CD4-positive, alpha-beta memory T cell (primary cell): ENCODE measurements at regions of chr2 and their contacts with region 1.

Region 1: GRCh38 chr2:42095923-42096408 is 48.1 kb downstream of the PKDCC start:
- DNase-seq: peak; percentile 68 to 76 (median 74)
- H3K4me3 ChIP-seq: no peak overlapping the region
- H3K4me3 Mint-ChIP-seq: no peak overlapping the region
- H3K27ac ChIP-seq: no peak overlapping the region
- H3K27ac Mint-ChIP-seq: peak overlapping the region; percentile 22 to 97 (median 80)
- H3K4me1 ChIP-seq: peaks cover 54% of the 10 kb centered on the region
- H3K4me1 Mint-ChIP-seq: peaks cover 37 to 59% (median 46%) of the 10 kb centered on the region in 4 donors
- H3K27me3 ChIP-seq: no peaks in the 10 kb centered on the region
- H3K27me3 Mint-ChIP-seq: no peaks in the 10 kb centered on the region

Region 2: DNA sequence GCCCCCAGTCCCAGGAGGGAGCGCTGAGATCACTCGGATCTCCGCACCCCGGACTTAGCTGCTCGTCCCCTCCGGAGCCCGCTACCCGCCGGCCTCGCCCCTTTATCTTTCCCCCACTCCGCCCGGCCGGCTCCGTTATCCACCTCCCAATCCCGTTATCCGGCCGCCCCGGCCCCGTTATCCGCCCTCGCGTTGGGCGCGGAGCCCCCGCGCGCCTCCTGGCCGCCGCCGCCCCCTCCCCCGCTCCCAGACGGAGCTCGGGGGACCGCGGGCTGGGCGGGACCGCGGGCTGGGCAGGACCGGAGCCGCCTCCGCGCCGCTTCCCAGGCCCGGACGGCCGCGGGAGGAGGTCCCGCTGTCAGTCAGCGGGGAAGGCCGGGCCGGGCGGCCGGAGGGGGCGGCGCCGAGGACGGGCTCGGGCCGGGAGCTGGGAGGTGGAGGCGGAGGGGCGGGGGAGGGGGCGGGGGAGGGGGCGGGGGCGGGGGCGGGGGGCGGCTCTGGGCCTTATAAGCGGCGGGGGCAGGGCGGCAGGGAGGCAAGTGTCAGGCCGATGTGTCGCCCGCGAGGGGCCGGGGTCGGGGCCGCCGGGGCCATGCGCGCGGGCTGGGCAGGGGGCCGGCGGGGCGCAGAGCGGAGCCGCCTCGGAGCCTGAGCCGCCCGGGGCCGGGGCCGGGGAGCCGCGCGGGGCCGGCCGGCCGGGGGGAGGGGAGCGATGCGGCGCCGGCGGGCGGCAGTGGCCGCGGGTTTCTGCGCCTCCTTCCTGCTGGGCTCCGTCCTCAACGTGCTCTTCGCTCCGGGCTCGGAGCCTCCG is 48.3 kb before region 1 on chr2 and contains the start of gene PKDCC:
- CTCF ChIA-PET with region 1: no interaction called
- POLR2A ChIA-PET with region 1: no interaction called
- intact Hi-C with region 1: no loop called
- DNase-seq: peak in 4 of 5 donors; percentile 9 to 28 (median 19)
- H3K4me3 ChIP-seq: peak within 1 kb of the TSS in 1 of 2 donors; percentile 27
- H3K4me3 Mint-ChIP-seq: peak within 1 kb of the TSS; percentile 77 to 82 (median 80)
- H3K27ac ChIP-seq: no peak within 1 kb of the TSS
- H3K27ac Mint-ChIP-seq: peak within 1 kb of the TSS in 1 of 7 donors; percentile 62
- H3K4me1 ChIP-seq: peaks cover 6% of the 10 kb centered on the region
- H3K4me1 Mint-ChIP-seq: peaks cover 2 to 18% (median 5%) of the 10 kb centered on the region in 4 donors
- H3K27me3 ChIP-seq: peaks cover 17% of the 10 kb centered on the region
- H3K27me3 Mint-ChIP-seq: peaks cover 34 to 35% of the 10 kb centered on the region in 2 donors
- total RNA-seq, gene PKDCC: not detected

Region 3: DNA sequence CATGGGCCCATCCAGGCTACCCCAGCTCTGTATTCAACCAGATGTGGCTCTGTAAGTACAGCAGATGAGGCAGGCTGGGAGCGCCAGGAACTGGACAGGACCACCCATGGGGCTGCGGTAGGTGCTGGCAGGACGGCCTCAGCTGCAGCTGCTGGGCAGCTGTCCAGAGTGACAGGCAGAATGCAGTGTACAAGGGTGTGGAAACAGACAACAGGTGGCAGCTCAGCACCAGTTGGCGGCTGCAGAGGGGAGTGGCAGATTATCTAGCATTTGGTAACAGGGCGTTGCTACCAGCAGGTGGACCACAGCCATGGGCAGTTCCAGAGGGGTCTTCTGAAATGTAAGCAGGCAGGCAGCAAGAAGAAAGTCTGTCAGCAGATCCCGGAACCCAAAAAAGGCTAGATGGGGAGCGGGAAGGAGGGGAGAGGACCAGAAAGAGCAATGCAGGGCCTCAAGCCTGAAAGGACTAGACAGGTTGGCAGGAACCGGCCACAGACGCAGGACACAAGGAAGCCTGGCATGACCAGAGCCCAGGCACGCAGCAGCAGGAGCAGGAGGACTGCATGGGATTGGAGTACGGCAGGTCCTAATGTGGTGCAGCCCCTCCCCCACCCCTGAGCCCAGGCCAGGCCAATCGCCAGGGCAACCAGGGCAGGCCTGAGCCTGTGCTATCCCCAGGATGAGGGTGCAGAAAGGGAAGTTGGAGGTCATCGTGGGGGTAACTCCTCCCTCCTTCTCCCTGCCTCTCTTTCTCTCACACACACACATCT is 23.4 kb before region 1 on chr2:
- CTCF ChIA-PET with region 1: no interaction called
- POLR2A ChIA-PET with region 1: no interaction called
- intact Hi-C with region 1: no loop called
- DNase-seq: no peak
- H3K4me3 ChIP-seq: no peak overlapping the region
- H3K4me3 Mint-ChIP-seq: no peak overlapping the region
- H3K27ac ChIP-seq: no peak overlapping the region
- H3K27ac Mint-ChIP-seq: no peak overlapping the region
- H3K4me1 ChIP-seq: no peaks in the 10 kb centered on the region
- H3K4me1 Mint-ChIP-seq: no peaks in the 10 kb centered on the region
- H3K27me3 ChIP-seq: peaks cover 5% of the 10 kb centered on the region
- H3K27me3 Mint-ChIP-seq: peaks cover 8 to 19% of the 10 kb centered on the region in 2 donors

Region 4: DNA sequence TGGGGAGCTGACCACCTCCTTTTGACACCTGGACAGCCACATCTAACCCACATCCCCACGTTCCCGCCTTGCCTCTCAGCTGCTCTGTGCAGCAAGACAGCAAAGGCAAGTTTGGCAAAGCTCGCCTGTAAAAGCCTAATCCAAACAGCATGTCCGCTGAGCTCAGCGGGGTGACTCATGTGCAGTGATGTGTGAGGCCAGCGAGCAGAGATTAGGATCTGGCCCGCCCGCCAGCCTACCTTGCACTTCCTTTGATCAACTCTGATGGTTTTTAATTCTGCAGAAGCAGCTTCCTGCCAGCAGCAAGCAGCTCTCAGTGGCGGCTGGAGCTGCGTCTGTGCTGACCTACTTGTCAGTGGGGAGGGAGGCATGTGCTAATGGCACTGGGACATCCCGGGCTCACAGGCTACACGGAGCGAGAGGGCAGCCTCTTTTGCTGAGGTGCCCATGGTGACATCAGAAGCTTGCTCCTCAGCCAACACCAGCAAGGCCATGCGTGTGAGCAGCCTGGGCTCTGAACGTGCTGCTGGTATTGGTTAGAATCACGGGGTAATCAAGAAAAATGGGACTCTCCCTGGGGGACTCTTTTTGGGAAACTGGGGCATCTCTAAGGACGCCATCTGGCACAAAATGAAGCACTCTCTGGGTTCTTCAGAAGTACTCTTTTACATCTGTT is 37.1 kb after region 1 on chr2:
- CTCF ChIA-PET with region 1: interaction called, 173 read pairs
- POLR2A ChIA-PET with region 1: interaction called, 1,146 read pairs
- intact Hi-C with region 1: no loop called
- DNase-seq: peak; percentile 92 to 99 (median 96)
- H3K4me3 ChIP-seq: peak overlapping the region; percentile 16 to 21
- H3K4me3 Mint-ChIP-seq: peak overlapping the region; percentile 58 to 88 (median 76)
- H3K27ac ChIP-seq: peak overlapping the region; percentile 93
- H3K27ac Mint-ChIP-seq: peak overlapping the region; percentile 88 to 100 (median 99)
- H3K4me1 ChIP-seq: peaks cover 99% of the 10 kb centered on the region
- H3K4me1 Mint-ChIP-seq: peaks cover 68 to 100% (median 88%) of the 10 kb centered on the region in 4 donors
- H3K27me3 ChIP-seq: no peaks in the 10 kb centered on the region
- H3K27me3 Mint-ChIP-seq: no peaks in the 10 kb centered on the region

Region 5: GRCh38 chr2:42191285-42192009 is 95.5 kb after region 1 on chr2:
- CTCF ChIA-PET with region 1: interaction called, 128 read pairs
- POLR2A ChIA-PET with region 1: interaction called, 5 read pairs
- intact Hi-C with region 1: loop called (anchors 1 kb)
- DNase-seq: no peak
- H3K4me3 ChIP-seq: no peak overlapping the region
- H3K4me3 Mint-ChIP-seq: peak overlapping the region in 6 of 8 donors; percentile 10 to 67 (median 38)
- H3K27ac ChIP-seq: no peak overlapping the region
- H3K27ac Mint-ChIP-seq: peak overlapping the region; percentile 36 to 94 (median 68)
- H3K4me1 ChIP-seq: peaks cover 93% of the 10 kb centered on the region
- H3K4me1 Mint-ChIP-seq: peaks cover 52 to 89% (median 68%) of the 10 kb centered on the region in 4 donors
- H3K27me3 ChIP-seq: no peaks in the 10 kb centered on the region
- H3K27me3 Mint-ChIP-seq: no peaks in the 10 kb centered on the region

Region 6: DNA sequence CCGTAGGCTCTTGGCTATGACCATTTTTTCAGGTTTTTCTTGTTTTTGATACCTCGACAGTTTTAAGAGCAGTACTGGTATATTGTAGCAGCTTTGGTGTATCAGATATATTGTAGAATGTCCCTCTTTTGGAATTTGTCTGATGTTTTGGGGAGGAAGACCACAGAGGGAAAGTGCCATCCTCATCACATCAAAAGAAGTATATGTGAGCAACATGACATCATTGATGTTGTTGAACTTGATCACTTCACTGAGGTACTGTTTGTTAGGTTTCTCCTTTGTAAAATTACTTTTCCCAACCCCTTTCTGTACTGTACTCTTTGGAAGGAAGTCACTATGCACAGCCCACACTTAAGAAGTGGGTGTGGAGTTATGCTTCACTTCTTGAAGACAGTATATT is 114.2 kb after region 1 on chr2:
- CTCF ChIA-PET with region 1: interaction called, 26 read pairs
- POLR2A ChIA-PET with region 1: interaction called, 3 read pairs
- intact Hi-C with region 1: no loop called
- DNase-seq: no peak
- H3K4me3 ChIP-seq: no peak overlapping the region
- H3K4me3 Mint-ChIP-seq: peak overlapping the region in 5 of 8 donors; percentile 53 to 75 (median 64)
- H3K27ac ChIP-seq: no peak overlapping the region
- H3K27ac Mint-ChIP-seq: peak overlapping the region in 4 of 7 donors; percentile 16 to 88 (median 60)
- H3K4me1 ChIP-seq: peaks cover 82% of the 10 kb centered on the region
- H3K4me1 Mint-ChIP-seq: peaks cover 48 to 83% (median 65%) of the 10 kb centered on the region in 4 donors
- H3K27me3 ChIP-seq: no peaks in the 10 kb centered on the region
- H3K27me3 Mint-ChIP-seq: no peaks in the 10 kb centered on the region

Region 7: GRCh38 chr2:42238644-42239288 is 142.8 kb after region 1 on chr2:
- CTCF ChIA-PET with region 1: interaction called, 99 read pairs
- POLR2A ChIA-PET with region 1: no interaction called
- intact Hi-C with region 1: loop called (anchors 1 kb)
- DNase-seq: peak; percentile 40 to 51 (median 48)
- H3K4me3 ChIP-seq: no peak overlapping the region
- H3K4me3 Mint-ChIP-seq: peak overlapping the region in 5 of 8 donors; percentile 20 to 51 (median 39)
- H3K27ac ChIP-seq: no peak overlapping the region
- H3K27ac Mint-ChIP-seq: peak overlapping the region in 6 of 7 donors; percentile 43 to 80 (median 64)
- H3K4me1 ChIP-seq: peaks cover 99% of the 10 kb centered on the region
- H3K4me1 Mint-ChIP-seq: peaks cover 64 to 92% (median 81%) of the 10 kb centered on the region in 4 donors
- H3K27me3 ChIP-seq: no peaks in the 10 kb centered on the region
- H3K27me3 Mint-ChIP-seq: no peaks in the 10 kb centered on the region

Region 8: GRCh38 chr2:42328148-42328833 is 232.3 kb after region 1 on chr2:
- CTCF ChIA-PET with region 1: interaction called, 37 read pairs
- POLR2A ChIA-PET with region 1: interaction called, 4 read pairs
- intact Hi-C with region 1: loop called (anchors 1 kb)
- DNase-seq: peak in 4 of 5 donors; percentile 31 to 37 (median 33)
- H3K4me3 ChIP-seq: no peak overlapping the region
- H3K4me3 Mint-ChIP-seq: no peak overlapping the region
- H3K27ac ChIP-seq: no peak overlapping the region
- H3K27ac Mint-ChIP-seq: peak overlapping the region; percentile 0 to 85 (median 62)
- H3K4me1 ChIP-seq: no peaks in the 10 kb centered on the region
- H3K4me1 Mint-ChIP-seq: peaks cover 2 to 9% (median 5%) of the 10 kb centered on the region in 4 donors
- H3K27me3 ChIP-seq: no peaks in the 10 kb centered on the region
- H3K27me3 Mint-ChIP-seq: no peaks in the 10 kb centered on the region